T-cell (primary cell): ENCODE measurements at regions of chr14 and their contacts with region 1.

Region 1: GRCh38 chr14:21498553-21499526 is 12.3 kb downstream of the METTL3 start:
- DNase-seq: peak in 14 of 35 experiments; percentile 4 to 79 (median 26)
- ATAC-seq: peak; percentile 54 to 91 (median 64)
- H3K4me3 ChIP-seq: no peak overlapping the region
- H3K4me3 Mint-ChIP-seq: no peak overlapping the region
- H3K27ac ChIP-seq: peak overlapping the region; percentile 11
- H3K27ac Mint-ChIP-seq: peak overlapping the region; percentile 58 to 77
- H3K4me1 ChIP-seq: peaks cover 4 to 6% of the 10 kb centered on the region in 2 experiments
- H3K4me1 Mint-ChIP-seq: peaks cover 20 to 31% (median 23%) of the 10 kb centered on the region in 3 donors
- H3K27me3 ChIP-seq: no peaks in the 10 kb centered on the region
- H3K27me3 Mint-ChIP-seq: no peaks in the 10 kb centered on the region

Region 2: GRCh38 chr14:21317398-21317797 is 181.4 kb before region 1 on chr14:
- CTCF ChIA-PET with region 1: no interaction called
- POLR2A ChIA-PET with region 1: no interaction called
- DNase-seq: no peak
- ATAC-seq: no peak
- H3K4me3 ChIP-seq: no peak overlapping the region
- H3K4me3 Mint-ChIP-seq: no peak overlapping the region
- H3K27ac ChIP-seq: no peak overlapping the region
- H3K27ac Mint-ChIP-seq: no peak overlapping the region
- H3K4me1 ChIP-seq: no peaks in the 10 kb centered on the region
- H3K4me1 Mint-ChIP-seq: peaks cover 8 to 13% (median 8%) of the 10 kb centered on the region in 3 donors
- H3K27me3 ChIP-seq: peaks cover 0 to 19% of the 10 kb centered on the region in 2 experiments
- H3K27me3 Mint-ChIP-seq: peaks cover 0 to under 1% of the 10 kb centered on the region in 2 donors

Region 3: GRCh38 chr14:21437063-21437901 is 61.6 kb before region 1 on chr14:
- CTCF ChIA-PET with region 1: interaction called in 1 of 2 experiments, 11 read pairs
- POLR2A ChIA-PET with region 1: no interaction called
- DNase-seq: peak; percentile 95 to 100 (median 99)
- ATAC-seq: peak; percentile 98 to 100 (median 99)
- H3K4me3 ChIP-seq: peak overlapping the region; percentile 79 to 91
- H3K4me3 Mint-ChIP-seq: peak overlapping the region; percentile 85 to 93 (median 88)
- H3K27ac ChIP-seq: peak overlapping the region; percentile 92
- H3K27ac Mint-ChIP-seq: peak overlapping the region; percentile 87 to 93
- H3K4me1 ChIP-seq: peaks cover 12 to 20% of the 10 kb centered on the region in 2 experiments
- H3K4me1 Mint-ChIP-seq: peaks cover 69 to 85% (median 71%) of the 10 kb centered on the region in 3 donors
- H3K27me3 ChIP-seq: no peaks in the 10 kb centered on the region
- H3K27me3 Mint-ChIP-seq: no peaks in the 10 kb centered on the region

Region 4: DNA sequence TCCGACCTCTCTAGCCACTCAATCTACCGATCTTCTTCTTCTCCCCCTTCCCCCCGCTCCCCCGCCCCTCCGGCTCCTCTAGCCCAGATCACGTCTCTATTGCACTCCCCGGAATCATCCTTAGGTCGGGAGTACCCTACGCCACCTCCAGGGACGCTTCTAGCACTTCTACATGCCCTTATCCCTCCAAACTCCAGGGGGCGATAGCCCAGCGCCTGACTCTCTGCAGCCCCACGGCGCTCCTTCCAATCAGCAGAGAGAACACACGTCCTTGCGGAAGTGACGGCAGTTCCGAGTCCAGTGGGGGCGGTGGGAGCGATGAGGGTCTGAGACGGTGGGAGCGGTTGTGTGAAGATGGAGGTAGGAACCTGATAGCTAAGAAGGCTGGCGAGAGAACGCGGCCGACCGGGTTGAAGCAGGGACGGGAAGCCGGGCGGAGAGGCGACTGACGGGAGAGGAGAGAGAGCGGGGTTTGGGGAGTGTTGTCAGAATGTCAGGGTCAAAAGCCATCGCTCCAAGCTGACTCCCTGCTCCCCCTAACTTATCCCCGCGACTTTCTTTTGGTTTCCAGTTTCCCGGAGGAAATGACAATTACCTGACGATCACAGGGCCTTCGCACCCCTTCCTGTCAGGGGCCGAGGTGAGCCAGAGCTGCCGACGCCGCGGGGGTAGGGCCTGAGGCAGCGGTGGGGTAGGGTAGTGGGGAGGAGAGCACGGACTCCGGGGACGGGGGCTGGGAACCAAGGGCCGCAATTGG is 21.7 kb before region 1 on chr14 and contains the starts of genes RAB2B and TOX4:
- CTCF ChIA-PET with region 1: interaction called, 12 to 24 read pairs
- POLR2A ChIA-PET with region 1: interaction called in 1 of 2 experiments, 3 read pairs
- DNase-seq: peak; percentile 86 to 99 (median 95)
- ATAC-seq: peak; percentile 94 to 99 (median 97)
- H3K4me3 ChIP-seq: peak within 1 kb of the TSS; percentile 77 to 95
- H3K4me3 Mint-ChIP-seq: peak within 1 kb of the TSS; percentile 97 to 100 (median 100)
- H3K27ac ChIP-seq: peak within 1 kb of the TSS; percentile 89
- H3K27ac Mint-ChIP-seq: peak within 1 kb of the TSS; percentile 99
- H3K4me1 ChIP-seq: peaks cover 15 to 16% of the 10 kb centered on the region in 2 experiments
- H3K4me1 Mint-ChIP-seq: peaks cover 45 to 57% (median 51%) of the 10 kb centered on the region in 3 donors
- H3K27me3 ChIP-seq: no peaks in the 10 kb centered on the region
- H3K27me3 Mint-ChIP-seq: no peaks in the 10 kb centered on the region
- total RNA-seq, gene RAB2B: 23.6 to 33.7 (median 27.6) TPM
- total RNA-seq, gene TOX4: 68.7 to 95.6 (median 78.9) TPM

Region 5: GRCh38 chr14:21486640-21487087 is 12.2 kb before region 1 on chr14:
- CTCF ChIA-PET with region 1: interaction called, 3 to 18 read pairs
- POLR2A ChIA-PET with region 1: no interaction called
- DNase-seq: no peak
- ATAC-seq: no peak
- H3K4me3 ChIP-seq: no peak overlapping the region
- H3K4me3 Mint-ChIP-seq: no peak overlapping the region
- H3K27ac ChIP-seq: no peak overlapping the region
- H3K27ac Mint-ChIP-seq: no peak overlapping the region
- H3K4me1 ChIP-seq: no peaks in the 10 kb centered on the region
- H3K4me1 Mint-ChIP-seq: peaks cover 8 to 13% (median 11%) of the 10 kb centered on the region in 3 donors
- H3K27me3 ChIP-seq: no peaks in the 10 kb centered on the region
- H3K27me3 Mint-ChIP-seq: no peaks in the 10 kb centered on the region

Region 6: GRCh38 chr14:21510735-21511657 is 12.2 kb after region 1 on chr14 and contains the start of gene METTL3:
- CTCF ChIA-PET with region 1: interaction called, 8 to 23 read pairs
- POLR2A ChIA-PET with region 1: interaction called, 3 to 5 read pairs
- DNase-seq: peak; percentile 84 to 98 (median 95)
- ATAC-seq: peak; percentile 99 to 100 (median 100)
- H3K4me3 ChIP-seq: peak within 1 kb of the TSS; percentile 78 to 89
- H3K4me3 Mint-ChIP-seq: peak within 1 kb of the TSS; percentile 98 to 99 (median 99)
- H3K27ac ChIP-seq: peak within 1 kb of the TSS; percentile 85
- H3K27ac Mint-ChIP-seq: peak within 1 kb of the TSS; percentile 96 to 98
- H3K4me1 ChIP-seq: peaks cover 14 to 25% of the 10 kb centered on the region in 2 experiments
- H3K4me1 Mint-ChIP-seq: peaks cover 40 to 45% (median 41%) of the 10 kb centered on the region in 3 donors
- H3K27me3 ChIP-seq: peaks cover 0 to 2% of the 10 kb centered on the region in 2 experiments
- H3K27me3 Mint-ChIP-seq: no peaks in the 10 kb centered on the region
- total RNA-seq, gene METTL3: 48.0 to 94.6 (median 91.6) TPM

Region 7: GRCh38 chr14:21525962-21526671 is 27.3 kb after region 1 on chr14 and contains the start of gene SALL2:
- CTCF ChIA-PET with region 1: interaction called in 1 of 2 experiments, 21 read pairs
- POLR2A ChIA-PET with region 1: interaction called in 1 of 2 experiments, 3 read pairs
- DNase-seq: peak; percentile 22 to 74 (median 45)
- ATAC-seq: peak; percentile 85 to 92 (median 87)
- H3K4me3 ChIP-seq: peak within 1 kb of the TSS; percentile 54 to 70
- H3K4me3 Mint-ChIP-seq: peak within 1 kb of the TSS; percentile 72 to 85 (median 81)
- H3K27ac ChIP-seq: no peak within 1 kb of the TSS
- H3K27ac Mint-ChIP-seq: peak within 1 kb of the TSS; percentile 9 to 66
- H3K4me1 ChIP-seq: peaks cover 9 to 15% of the 10 kb centered on the region in 2 experiments
- H3K4me1 Mint-ChIP-seq: peaks cover 17 to 21% (median 18%) of the 10 kb centered on the region in 3 donors
- H3K27me3 ChIP-seq: no peaks in the 10 kb centered on the region
- H3K27me3 Mint-ChIP-seq: no peaks in the 10 kb centered on the region
- total RNA-seq, gene SALL2: 3.3 to 5.8 (median 4.6) TPM

Region 8: GRCh38 chr14:21557084-21557901 is 58.5 kb after region 1 on chr14:
- CTCF ChIA-PET with region 1: interaction called, 13 to 50 read pairs
- POLR2A ChIA-PET with region 1: interaction called, 3 to 27 read pairs
- DNase-seq: peak; percentile 37 to 92 (median 66)
- ATAC-seq: peak; percentile 64 to 74 (median 68)
- H3K4me3 ChIP-seq: peak overlapping the region in 1 of 2 donors; percentile 23
- H3K4me3 Mint-ChIP-seq: peak overlapping the region; percentile 10 to 58 (median 26)
- H3K27ac ChIP-seq: no peak overlapping the region
- H3K27ac Mint-ChIP-seq: peak overlapping the region; percentile 4 to 44
- H3K4me1 ChIP-seq: peaks cover 0 to 4% of the 10 kb centered on the region in 2 experiments
- H3K4me1 Mint-ChIP-seq: peaks cover 6 to 7% (median 6%) of the 10 kb centered on the region in 3 donors
- H3K27me3 ChIP-seq: no peaks in the 10 kb centered on the region
- H3K27me3 Mint-ChIP-seq: no peaks in the 10 kb centered on the region